PC-9 (cell line): ENCODE measurements at regions of chr18 and their contacts with region 1.

Region 1: GRCh38 chr18:78238404-78239089 is 741.1 kb upstream of the SALL3 start:
- DNase-seq: no peak
- H3K4me3 ChIP-seq: no peak overlapping the region
- H3K27ac ChIP-seq: no peak overlapping the region
- H3K4me1 ChIP-seq: no peaks in the 10 kb centered on the region
- H3K27me3 ChIP-seq: peaks cover 35% of the 10 kb centered on the region
- CTCF ChIP-seq: no peak

Region 2: DNA sequence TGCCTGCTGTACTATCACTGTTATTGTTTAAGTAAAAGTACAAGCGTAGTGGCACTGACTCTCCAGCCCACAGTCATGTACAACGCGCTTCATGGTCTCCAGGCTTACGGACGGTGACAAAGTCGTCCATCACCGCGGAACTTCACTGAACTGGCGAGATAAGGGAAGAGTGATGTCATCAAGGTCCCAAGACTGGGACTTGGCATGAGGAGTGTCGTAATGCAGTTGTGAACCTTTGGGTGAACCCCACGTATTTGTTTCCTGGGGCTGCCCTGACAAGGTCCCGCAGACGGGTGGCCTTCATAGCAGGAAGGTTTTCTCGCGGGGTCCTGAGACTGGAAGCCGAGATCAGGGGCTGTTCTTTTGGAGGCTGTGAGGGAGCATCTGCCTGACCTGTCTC is 1174.5 kb after region 1 on chr18:
- CTCF ChIA-PET with region 1: interaction called, 18 read pairs
- POLR2A ChIA-PET with region 1: no interaction called
- intact Hi-C with region 1: no loop called
- DNase-seq: no peak
- H3K4me3 ChIP-seq: no peak overlapping the region
- H3K27ac ChIP-seq: no peak overlapping the region
- H3K4me1 ChIP-seq: no peaks in the 10 kb centered on the region
- H3K27me3 ChIP-seq: no peaks in the 10 kb centered on the region
- CTCF ChIP-seq: no peak